Mucosa of descending colon (tissue), 3 donors: ENCODE measurements at regions of chr3 and their contacts with region 1.

Region 1: GRCh38 chr3:4712143-4712542 is 219.0 kb downstream of the ITPR1 start:
- DNase-seq: peak in 1 of 3 donors; percentile 63
- ATAC-seq: peak; percentile 85
- H3K4me3 ChIP-seq: no peak overlapping the region
- H3K4me1 ChIP-seq: peaks cover 8% of the 10 kb centered on the region
- CTCF ChIP-seq: no peak

Region 2: GRCh38 chr3:4978204-4978965 is 266.2 kb after region 1 on chr3:
- intact Hi-C with region 1: loop called in 1 of 2 experiments (anchors 5 kb)
- DNase-seq: peak; percentile 97 to 98 (median 97)
- ATAC-seq: peak; percentile 73
- H3K4me3 ChIP-seq: peak overlapping the region; percentile 73
- H3K4me1 ChIP-seq: peaks cover 25% of the 10 kb centered on the region
- CTCF ChIP-seq: no peak

Region 3: GRCh38 chr3:5026331-5027218 is 314.4 kb after region 1 on chr3:
- intact Hi-C with region 1: loop called (anchors 5 to 10 kb)
- DNase-seq: peak; percentile 83 to 89 (median 85)
- ATAC-seq: peak; percentile 96
- H3K4me3 ChIP-seq: no peak overlapping the region
- H3K4me1 ChIP-seq: peaks cover 7% of the 10 kb centered on the region
- CTCF ChIP-seq: peak; percentile 26

Region 4: DNA sequence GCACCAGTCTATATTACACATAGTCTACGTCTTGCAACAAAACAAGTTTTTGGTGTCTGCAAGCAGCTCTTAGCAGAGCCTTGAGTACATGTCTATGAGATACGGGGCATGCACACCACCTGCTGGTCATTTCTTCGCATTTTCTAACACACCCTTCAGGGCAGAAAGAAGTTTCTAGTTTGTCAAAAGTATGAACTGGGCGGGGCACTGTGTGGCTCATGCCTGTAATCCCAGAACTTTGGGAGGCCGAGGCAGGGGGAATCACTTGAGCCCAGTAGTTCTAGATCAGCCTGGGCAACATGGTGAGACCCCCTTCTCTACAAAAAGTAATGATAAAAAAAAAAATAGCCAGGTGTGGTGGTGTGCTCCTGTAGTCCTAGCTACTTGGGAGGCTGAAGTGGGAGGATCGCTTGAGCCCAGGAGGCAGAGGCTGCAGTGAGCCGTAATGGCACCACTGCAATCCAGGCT is 345.7 kb after region 1 on chr3:
- intact Hi-C with region 1: loop called (anchors 10 kb)
- DNase-seq: peak in 2 of 3 donors; percentile 65 to 93
- ATAC-seq: peak; percentile 91
- H3K4me3 ChIP-seq: no peak overlapping the region
- H3K4me1 ChIP-seq: peaks cover 3% of the 10 kb centered on the region
- CTCF ChIP-seq: peak; percentile 47